ENCODE measurements at regions of chr5 and their contacts with region 1.

Region 1: DNA sequence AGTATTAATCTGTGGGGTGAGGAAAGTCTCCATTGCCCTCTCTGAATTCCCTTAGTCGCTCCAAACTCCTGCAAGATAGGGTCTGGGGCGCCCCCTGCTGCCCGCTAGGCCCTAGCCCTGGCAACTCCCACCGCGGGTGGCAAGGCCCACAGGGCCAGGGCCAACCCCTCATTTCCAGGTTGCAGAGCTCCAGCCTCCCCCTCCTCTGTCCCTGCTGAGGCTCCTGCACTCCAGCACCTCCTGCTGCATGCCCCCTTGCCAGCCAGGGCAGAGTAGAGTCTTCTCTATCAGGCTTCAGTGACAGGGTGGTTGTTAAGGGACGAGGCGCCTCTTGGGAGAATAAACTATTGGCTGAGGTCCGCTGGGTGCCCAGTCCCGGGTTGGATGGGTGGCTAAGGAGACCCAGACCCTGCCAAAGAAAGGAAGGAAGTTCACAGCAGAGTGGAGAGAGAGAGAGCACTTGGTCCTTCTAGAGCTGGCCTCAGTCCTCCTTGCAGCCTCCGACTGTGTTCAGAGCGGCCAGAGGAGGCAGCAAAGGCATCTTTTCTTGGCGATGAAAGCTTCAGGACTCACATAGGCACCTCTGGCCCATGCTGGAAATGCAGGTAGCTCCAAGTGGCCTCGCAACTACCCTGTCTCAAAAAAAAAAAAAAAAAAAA is 45.6 kb downstream of the SAR1B start:
- H3K4me3 Mint-ChIP-seq: no peak overlapping the region
- H3K27ac Mint-ChIP-seq: no peak overlapping the region
- H3K4me1 Mint-ChIP-seq: peaks cover 6% of the 10 kb centered on the region
- H3K27me3 Mint-ChIP-seq: no peaks in the 10 kb centered on the region

Region 2: GRCh38 chr5:134209477-134210240 is 377.3 kb before region 1 on chr5:
- intact Hi-C with region 1: loop called (anchors 10 kb)
- H3K4me3 Mint-ChIP-seq: no peak overlapping the region
- H3K27ac Mint-ChIP-seq: no peak overlapping the region
- H3K4me1 Mint-ChIP-seq: peaks cover 39% of the 10 kb centered on the region
- H3K27me3 Mint-ChIP-seq: no peaks in the 10 kb centered on the region

Region 3: DNA sequence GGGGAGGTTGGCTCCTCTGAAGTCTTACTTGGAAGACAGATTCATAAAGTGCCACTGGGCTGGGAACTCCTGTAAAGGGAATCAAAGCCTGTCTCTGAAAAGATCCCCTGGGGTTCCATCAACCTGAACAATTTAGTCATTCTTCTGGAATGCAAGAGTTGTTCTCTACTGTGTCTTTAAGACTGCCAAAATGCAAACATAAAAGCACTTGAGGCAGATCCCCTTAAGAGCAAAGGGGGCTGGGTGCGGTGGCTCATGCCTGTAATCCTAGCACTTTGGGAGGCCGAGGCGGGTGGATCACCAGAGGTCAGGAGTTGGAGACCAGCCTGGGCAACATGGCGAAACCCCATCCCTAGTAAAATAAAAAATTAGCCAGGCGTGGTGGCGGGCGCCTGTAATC is 192.1 kb before region 1 on chr5:
- intact Hi-C with region 1: loop called (anchors 10 kb)
- H3K4me3 Mint-ChIP-seq: no peak overlapping the region
- H3K27ac Mint-ChIP-seq: no peak overlapping the region
- H3K4me1 Mint-ChIP-seq: no peaks in the 10 kb centered on the region
- H3K27me3 Mint-ChIP-seq: no peaks in the 10 kb centered on the region